ENCODE measurements at regions of chr14 and their contacts with region 1.

Region 1: DNA sequence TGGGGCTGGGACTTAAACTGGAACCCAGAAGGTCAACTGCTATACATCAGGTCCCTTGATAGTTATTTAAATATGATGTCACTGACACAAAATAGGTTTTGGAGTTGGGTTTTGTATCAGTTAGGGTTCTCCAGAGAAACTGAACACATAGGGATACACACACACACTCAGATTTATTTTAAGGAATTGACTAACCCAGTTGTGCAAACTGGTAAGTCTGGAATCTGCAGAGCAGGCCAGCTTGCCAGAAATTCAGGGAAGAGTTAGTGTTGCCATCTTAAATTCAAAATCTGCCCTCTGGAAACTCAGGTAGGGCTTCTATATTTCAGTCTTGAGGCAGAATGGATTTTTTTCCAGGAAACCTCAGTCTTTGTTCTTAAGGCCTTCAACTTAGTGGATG is 36.9 kb downstream of the MAPK1IP1L start:
- DNase-seq: no peak
- ATAC-seq: no peak
- H3K4me3 Mint-ChIP-seq: no peak overlapping the region
- H3K27ac Mint-ChIP-seq: no peak overlapping the region
- H3K4me1 Mint-ChIP-seq: peaks cover 32% of the 10 kb centered on the region
- H3K27me3 Mint-ChIP-seq: no peaks in the 10 kb centered on the region

Region 2: DNA sequence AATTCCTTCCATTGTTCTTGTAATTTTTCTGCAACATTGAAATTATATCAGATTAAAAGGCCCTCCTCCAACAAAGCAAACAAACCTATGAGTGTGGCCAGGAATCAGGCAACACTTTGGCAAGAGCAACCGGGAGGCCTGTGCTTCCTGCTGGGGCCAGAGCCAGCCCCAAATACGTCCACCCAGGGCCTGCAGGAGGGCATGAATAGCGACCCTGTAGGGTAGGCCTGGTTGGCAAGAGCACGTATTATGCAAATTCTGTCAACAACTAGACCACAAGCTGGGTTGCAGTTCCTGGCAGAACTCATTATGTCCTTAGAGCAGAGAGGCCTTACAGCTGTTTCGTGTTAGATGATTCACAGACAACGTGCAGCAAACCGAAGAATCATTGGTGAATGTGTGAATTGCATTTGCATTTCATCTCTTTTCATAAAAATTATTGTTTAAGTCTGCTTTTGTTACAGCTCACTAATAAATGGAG is 13.8 kb after region 1 on chr14:
- CTCF ChIA-PET with region 1: interaction called, 20 read pairs
- DNase-seq: peak; percentile 88
- ATAC-seq: peak; percentile 63
- H3K4me3 Mint-ChIP-seq: peak overlapping the region; percentile 67
- H3K27ac Mint-ChIP-seq: peak overlapping the region; percentile 100
- H3K4me1 Mint-ChIP-seq: peaks cover 75% of the 10 kb centered on the region
- H3K27me3 Mint-ChIP-seq: no peaks in the 10 kb centered on the region

Region 3: GRCh38 chr14:55107766-55108554 is 19.6 kb after region 1 on chr14:
- CTCF ChIA-PET with region 1: interaction called, 20 read pairs
- DNase-seq: peak; percentile 74
- ATAC-seq: peak; percentile 84
- H3K4me3 Mint-ChIP-seq: no peak overlapping the region
- H3K27ac Mint-ChIP-seq: peak overlapping the region; percentile 87
- H3K4me1 Mint-ChIP-seq: peaks cover 42% of the 10 kb centered on the region
- H3K27me3 Mint-ChIP-seq: no peaks in the 10 kb centered on the region

Region 4: GRCh38 chr14:55129428-55130195 is 41.3 kb after region 1 on chr14:
- CTCF ChIA-PET with region 1: interaction called, 18 read pairs
- DNase-seq: peak; percentile 77
- ATAC-seq: peak; percentile 70
- H3K4me3 Mint-ChIP-seq: peak overlapping the region; percentile 80
- H3K27ac Mint-ChIP-seq: peak overlapping the region; percentile 72
- H3K4me1 Mint-ChIP-seq: peaks cover 66% of the 10 kb centered on the region
- H3K27me3 Mint-ChIP-seq: peaks cover 5% of the 10 kb centered on the region

Region 5: GRCh38 chr14:55160989-55161388 is 72.6 kb after region 1 on chr14:
- CTCF ChIA-PET with region 1: interaction called, 54 read pairs
- DNase-seq: no peak
- ATAC-seq: peak; percentile 45
- H3K4me3 Mint-ChIP-seq: no peak overlapping the region
- H3K27ac Mint-ChIP-seq: no peak overlapping the region
- H3K4me1 Mint-ChIP-seq: peaks cover 19% of the 10 kb centered on the region
- H3K27me3 Mint-ChIP-seq: no peaks in the 10 kb centered on the region